Common myeloid progenitor, CD34-positive (primary cell): ENCODE measurements at regions of chr12 and their contacts with region 1.

Region 1: DNA sequence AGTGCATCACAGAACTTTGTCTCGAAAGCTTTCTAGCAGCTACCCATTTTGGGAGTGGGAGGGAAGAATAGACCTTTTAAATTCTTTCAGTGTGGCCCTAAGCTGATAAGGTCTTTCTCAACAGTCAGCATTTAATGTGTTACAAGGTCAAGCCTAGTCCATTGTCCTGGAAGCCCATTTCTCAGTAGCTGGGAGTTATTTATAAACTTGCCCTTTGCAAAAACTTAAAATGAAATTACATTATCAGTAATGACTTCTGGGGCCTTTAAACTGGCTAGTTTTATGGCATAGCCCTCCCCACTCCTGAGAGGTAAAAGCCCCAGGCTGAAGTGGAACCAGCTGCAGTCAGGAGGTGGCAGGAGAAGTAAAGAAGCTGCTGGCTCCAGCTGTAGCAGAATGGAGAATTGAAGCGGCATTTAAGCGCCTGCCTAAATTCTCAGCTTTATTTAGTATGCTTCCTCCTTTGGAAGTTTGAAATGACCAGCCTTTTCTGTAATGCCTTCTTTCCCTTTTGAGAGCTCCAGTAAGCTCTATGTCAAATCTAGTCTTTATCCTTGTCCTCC is 12.4 kb downstream of the COPZ1 start:
- DNase-seq: peak in 2 of 3 donors; percentile 59 to 68
- H3K4me3 ChIP-seq: no peak overlapping the region
- H3K27ac ChIP-seq: peak overlapping the region in 1 of 2 experiments; percentile 64
- H3K4me1 ChIP-seq: peaks cover 0 to 16% (median 6%) of the 10 kb centered on the region in 4 experiments
- H3K27me3 ChIP-seq: no peaks in the 10 kb centered on the region

Region 2: DNA sequence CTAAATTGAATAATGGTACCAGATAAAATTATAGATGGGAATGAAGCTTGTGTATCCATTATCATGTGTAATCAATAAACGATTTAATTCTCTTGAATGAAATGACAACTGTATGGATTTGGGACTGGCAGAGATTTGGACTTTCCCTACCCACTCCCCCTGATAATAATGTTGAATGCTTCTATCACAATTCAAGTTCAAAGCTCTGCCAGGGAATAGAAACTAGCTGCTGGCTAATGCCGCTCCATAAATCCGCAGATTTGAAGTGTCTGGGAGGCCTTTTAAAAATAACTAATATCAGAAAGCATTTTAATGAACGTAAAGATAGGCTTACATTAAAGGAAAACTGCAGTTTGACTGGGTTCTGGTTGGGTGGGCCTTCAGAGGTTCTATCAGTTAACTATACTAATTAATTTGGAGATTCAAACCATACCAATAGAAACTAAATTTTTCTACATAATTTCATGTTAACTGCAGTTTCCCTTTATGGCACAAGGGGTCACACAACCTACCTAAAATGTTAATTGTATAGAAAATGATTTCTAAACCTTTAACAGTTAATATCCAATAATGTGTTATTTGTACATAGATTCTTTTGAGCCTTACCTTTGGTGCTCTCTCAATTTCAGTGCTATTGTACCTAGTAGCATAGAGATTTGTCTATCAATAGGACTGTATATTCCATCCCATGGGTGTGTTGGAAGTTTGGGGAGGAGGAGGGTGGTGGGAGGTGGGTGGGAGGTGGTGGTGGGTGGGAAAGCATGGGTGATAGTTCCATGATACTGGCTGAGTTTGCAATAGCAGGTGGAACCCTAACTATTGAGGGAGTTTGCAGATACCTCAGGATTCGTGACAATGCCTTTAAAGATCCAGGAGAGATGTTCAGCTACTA is 52.0 kb before region 1 on chr12:
- CTCF ChIA-PET with region 1: interaction called, 890 read pairs
- POLR2A ChIA-PET with region 1: interaction called, 3 read pairs
- DNase-seq: peak in 2 of 3 donors; percentile 50 to 55
- H3K4me3 ChIP-seq: peak overlapping the region in 5 of 7 experiments; percentile 26 to 68 (median 53)
- H3K27ac ChIP-seq: peak overlapping the region in 1 of 2 experiments; percentile 76
- H3K4me1 ChIP-seq: peaks cover 30 to 82% (median 66%) of the 10 kb centered on the region in 4 experiments
- H3K27me3 ChIP-seq: no peaks in the 10 kb centered on the region

Region 3: DNA sequence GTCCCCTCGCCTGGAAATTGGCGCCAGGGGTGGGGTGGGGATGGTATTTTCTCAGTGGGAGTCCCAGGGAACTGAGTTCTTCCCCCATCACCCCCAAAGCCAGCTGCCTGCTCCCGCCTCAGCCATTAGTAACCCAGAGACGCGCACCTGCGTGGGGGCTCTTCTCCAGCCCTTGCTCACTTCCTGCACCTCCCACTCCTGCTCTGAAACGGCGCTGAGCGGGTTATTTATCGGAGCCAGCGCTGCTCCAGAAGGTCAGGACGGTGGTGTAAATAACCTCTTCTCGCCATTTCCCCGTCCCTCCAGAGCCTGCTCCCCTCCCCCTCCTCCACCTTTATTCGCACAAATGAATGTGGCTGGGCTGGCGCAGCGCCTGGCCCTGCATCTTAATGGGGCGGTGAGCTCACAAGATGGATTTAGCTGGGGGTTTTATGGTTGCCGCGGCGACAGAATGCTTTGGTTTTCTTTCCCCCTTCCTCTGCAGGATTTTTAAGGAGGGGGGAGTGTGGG is 14.7 kb after region 1 on chr12:
- CTCF ChIA-PET with region 1: interaction called, 174 read pairs
- POLR2A ChIA-PET with region 1: no interaction called
- DNase-seq: peak in 2 of 3 donors; percentile 72 to 73
- H3K4me3 ChIP-seq: peak overlapping the region in 5 of 7 experiments; percentile 35 to 73 (median 47)
- H3K27ac ChIP-seq: peak overlapping the region in 1 of 2 experiments; percentile 30
- H3K4me1 ChIP-seq: peaks cover 0 to 34% (median 27%) of the 10 kb centered on the region in 4 experiments
- H3K27me3 ChIP-seq: no peaks in the 10 kb centered on the region

Region 4: DNA sequence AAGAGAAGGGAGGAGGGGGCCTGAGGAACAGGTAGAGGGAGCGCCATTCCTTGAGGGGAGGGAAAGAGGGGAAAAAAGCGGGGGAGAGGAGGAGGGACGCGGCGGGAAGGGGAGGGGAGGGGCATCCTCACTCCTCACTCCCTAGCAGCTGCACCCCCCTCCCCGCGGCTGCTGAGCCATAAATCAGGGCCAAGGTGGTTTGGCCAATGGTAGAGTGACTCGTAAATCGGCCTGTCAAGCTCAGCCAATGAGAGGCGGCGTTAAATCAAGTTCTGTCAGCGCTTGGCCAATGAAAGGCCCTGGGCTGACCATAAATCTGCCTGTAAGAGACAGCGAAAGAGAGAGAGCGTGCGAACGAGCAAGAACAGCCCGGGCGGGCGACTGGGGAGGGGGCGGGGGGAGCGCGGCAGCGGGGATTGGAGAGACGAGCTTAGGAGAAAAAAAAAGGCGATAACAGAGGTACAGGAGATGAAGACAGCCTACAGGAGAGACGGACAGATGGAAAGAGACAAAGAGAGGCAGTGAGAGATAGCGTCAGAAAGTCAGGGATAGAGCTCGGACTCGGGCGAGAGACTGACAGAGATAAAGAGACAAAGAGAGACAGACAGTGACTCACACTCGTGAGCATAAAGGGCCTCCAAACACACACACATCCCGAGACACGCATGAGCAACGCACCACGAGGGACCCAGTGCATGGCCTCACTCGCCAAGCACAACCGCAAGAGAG is 21.8 kb after region 1 on chr12:
- CTCF ChIA-PET with region 1: interaction called, 174 read pairs
- POLR2A ChIA-PET with region 1: no interaction called
- DNase-seq: peak; percentile 99
- H3K4me3 ChIP-seq: peak overlapping the region; percentile 56 to 78 (median 74)
- H3K27ac ChIP-seq: peak overlapping the region; percentile 51 to 90
- H3K4me1 ChIP-seq: peaks cover 13 to 62% (median 53%) of the 10 kb centered on the region in 4 experiments
- H3K27me3 ChIP-seq: no peaks in the 10 kb centered on the region

Region 5: GRCh38 chr12:54368709-54369583 is 31.6 kb after region 1 on chr12:
- CTCF ChIA-PET with region 1: interaction called, 174 read pairs
- POLR2A ChIA-PET with region 1: no interaction called
- DNase-seq: peak; percentile 83 to 91 (median 87)
- H3K4me3 ChIP-seq: peak overlapping the region in 4 of 7 experiments; percentile 48 to 67 (median 51)
- H3K27ac ChIP-seq: peak overlapping the region in 1 of 2 experiments; percentile 25
- H3K4me1 ChIP-seq: peaks cover 15 to 51% (median 40%) of the 10 kb centered on the region in 4 experiments
- H3K27me3 ChIP-seq: no peaks in the 10 kb centered on the region

Region 6: DNA sequence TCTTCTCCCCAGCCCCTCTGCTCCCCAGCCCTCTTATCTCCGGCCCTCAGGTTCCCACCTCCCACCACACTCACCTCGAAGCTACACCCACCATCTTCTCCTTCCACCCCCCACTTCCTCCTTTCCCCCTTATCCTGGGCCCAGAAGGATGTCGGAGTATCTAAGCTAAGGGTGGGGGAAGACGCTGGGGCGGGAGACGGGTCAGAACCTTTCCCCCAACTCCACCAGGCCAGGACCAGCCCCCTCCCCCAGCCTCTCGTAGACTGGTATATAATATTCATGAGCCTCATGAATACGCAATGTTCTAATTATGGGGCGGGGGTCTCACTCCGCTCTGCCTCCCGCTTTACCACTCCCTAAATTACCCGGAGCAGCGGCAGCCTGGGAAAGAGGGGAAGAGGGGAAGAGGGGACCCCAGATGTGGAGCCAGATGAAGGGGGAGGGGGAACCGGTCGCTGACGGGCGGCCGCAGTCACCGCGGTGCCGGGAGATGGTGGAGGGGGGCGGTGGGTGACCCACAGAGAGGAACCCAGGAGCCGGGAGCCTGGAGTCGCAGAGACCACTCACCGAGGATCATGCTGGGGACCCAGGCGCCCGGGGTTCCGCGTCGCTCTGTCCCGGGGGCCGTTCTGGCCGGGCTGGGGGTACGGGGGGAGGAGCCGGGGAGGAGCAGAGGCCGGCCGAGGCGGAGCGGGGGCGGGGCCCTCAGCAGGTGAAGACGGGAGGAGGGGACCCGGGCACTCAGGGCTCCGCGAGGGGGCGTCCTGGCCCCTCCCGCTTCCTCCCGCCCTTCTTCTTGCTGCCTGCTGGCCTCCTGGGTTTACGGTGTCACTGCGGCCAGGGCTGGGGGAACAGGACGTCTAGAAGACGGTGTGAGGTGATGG is 53.5 kb after region 1 on chr12:
- CTCF ChIA-PET with region 1: interaction called, 14 read pairs
- POLR2A ChIA-PET with region 1: no interaction called
- DNase-seq: peak; percentile 69 to 87 (median 80)
- H3K4me3 ChIP-seq: peak overlapping the region; percentile 42 to 79 (median 73)
- H3K27ac ChIP-seq: peak overlapping the region; percentile 15 to 73
- H3K4me1 ChIP-seq: peaks cover 3 to 86% (median 54%) of the 10 kb centered on the region in 4 experiments
- H3K27me3 ChIP-seq: no peaks in the 10 kb centered on the region